Caco-2 (cell line): ENCODE measurements at regions of chr17 and their contacts with region 1.

Region 1: GRCh38 chr17:38403491-38403890 is 24.8 kb upstream of the ARHGAP23 start:
- DNase-seq: peak in 1 of 2 experiments; percentile 22
- H3K4me3 ChIP-seq: no peak overlapping the region
- H3K4me3 Mint-ChIP-seq: no peak overlapping the region
- H3K27ac Mint-ChIP-seq: no peak overlapping the region
- H3K4me1 ChIP-seq: no peaks in the 10 kb centered on the region
- H3K4me1 Mint-ChIP-seq: no peaks in the 10 kb centered on the region
- H3K27me3 ChIP-seq: no peaks in the 10 kb centered on the region
- H3K27me3 Mint-ChIP-seq: no peaks in the 10 kb centered on the region
- CTCF ChIP-seq: no peak

Region 2: DNA sequence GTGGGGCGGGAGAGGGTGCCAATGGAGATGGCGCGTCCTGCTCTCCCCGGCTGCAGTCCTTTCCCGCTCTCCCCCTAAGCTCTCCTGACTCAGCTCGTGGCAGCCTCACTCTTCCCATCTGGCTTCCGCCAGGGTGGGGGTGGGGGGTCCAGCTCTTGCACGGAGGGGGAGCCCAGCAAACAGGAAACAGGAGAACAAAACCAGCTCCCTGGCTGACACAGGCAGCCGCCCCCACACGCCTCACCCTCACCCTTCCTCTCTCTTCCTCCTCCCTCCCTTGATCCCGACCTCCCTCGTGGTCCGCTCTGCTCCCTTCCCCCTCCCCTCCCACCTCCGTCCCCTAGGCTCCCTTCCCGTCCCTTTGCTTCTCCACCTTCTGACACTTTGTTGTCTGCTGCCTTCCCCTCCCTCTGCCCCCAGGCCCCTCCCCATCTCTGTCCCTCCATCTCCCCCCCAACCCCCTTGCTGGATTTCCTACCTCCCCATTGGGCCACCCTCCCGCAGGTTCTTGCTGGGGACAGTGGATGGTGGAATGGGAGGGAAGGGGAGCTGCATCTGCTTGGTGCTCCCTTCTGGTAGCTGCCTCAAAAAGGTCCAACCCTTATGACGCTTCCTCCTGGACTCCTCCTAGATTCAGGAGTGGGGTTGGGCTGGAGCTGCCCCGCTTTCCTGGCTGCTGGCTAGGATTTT is 48.5 kb after region 1 on chr17:
- CTCF ChIA-PET with region 1: no interaction called
- POLR2A ChIA-PET with region 1: interaction called, 10 read pairs
- intact Hi-C with region 1: no loop called
- DNase-seq: peak in 1 of 2 experiments; percentile 81
- H3K4me3 ChIP-seq: peak overlapping the region; percentile 2; the same call in 1 of the 2 replicates
- H3K4me3 Mint-ChIP-seq: peak overlapping the region; percentile 94
- H3K27ac Mint-ChIP-seq: peak overlapping the region; percentile 97
- H3K4me1 ChIP-seq: peaks cover 75% of the 10 kb centered on the region
- H3K4me1 Mint-ChIP-seq: peaks cover 46% of the 10 kb centered on the region
- H3K27me3 ChIP-seq: no peaks in the 10 kb centered on the region
- H3K27me3 Mint-ChIP-seq: peaks cover 8% of the 10 kb centered on the region
- CTCF ChIP-seq: no peak